ENCODE measurements at regions of chr3 and their contacts with region 1.

Region 1: DNA sequence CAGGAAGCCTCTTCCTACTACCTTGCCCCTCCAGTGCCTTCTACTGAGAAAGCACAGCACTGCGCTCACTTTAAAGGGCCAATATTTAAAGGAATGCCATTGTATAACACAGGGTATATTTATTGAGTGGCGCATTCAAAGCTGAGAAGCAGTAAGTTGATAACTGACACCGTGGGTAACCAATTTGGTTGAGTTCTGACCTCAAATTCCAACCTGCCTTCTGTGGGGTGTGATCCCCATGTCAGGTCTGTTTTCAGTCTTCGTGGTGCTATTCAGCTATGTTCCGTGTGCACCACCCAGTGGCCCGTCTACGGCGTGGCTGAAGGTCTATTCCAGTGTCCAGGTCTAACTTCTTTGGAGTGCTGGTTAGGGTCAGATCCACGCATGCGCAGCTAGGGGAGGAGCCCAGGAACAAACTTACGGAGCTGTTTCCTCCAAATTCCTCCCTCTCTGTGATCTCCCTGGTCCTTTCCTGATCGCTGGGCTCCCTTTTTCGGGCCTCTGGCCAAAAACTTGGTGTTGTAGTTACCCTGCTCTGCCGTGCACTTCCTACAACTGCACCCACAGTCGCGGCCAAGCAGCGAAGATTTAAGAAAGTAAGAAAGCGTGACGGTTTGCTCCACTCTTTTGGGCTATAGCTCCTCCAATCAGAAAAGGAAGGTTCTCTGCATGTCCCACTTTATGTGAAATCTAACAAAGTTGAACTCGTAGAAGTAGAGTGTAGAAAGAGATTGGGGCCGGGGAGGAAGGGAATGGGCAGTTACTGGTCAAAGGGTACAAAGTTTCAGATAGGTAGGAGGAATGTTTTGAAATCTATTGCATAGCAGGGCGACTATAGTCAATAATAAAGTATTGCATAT is 7.7 kb downstream of the LRRC2 start:
- DNase-seq: peak; percentile 98
- ATAC-seq: peak; percentile 94
- H3K4me3 ChIP-seq: peak overlapping the region; percentile 71
- H3K27ac ChIP-seq: peak overlapping the region; percentile 40
- H3K4me1 ChIP-seq: peaks cover 33% of the 10 kb centered on the region
- H3K27me3 ChIP-seq: no peaks in the 10 kb centered on the region
- CTCF ChIP-seq: peak; percentile 96

Region 2: DNA sequence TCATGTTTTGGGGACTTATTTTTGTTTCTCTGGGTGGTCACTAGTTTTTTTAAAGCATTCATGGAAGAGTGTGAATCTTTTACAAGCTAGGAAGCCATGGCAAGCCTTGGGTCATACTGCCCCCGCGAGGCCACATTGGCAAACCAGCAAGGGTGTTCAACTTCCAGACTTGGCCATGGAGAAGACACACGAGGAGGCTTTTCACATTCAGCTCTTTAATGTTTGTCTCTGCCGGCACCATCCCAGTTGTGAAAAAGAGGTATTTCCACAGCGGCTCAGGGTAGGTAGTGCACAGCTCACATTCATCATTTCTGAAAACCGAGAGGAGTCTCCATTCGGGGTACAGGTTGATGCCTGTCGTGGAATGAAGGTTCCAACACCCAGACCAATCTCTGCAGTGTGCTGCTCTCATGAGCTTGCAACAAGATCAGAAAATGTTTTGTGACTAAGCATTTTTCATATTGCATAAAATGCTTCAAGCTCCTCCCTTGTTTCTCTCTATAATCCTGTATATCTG is 179.9 kb before region 1 on chr3:
- CTCF ChIA-PET with region 1: interaction called, 3 read pairs
- POLR2A ChIA-PET with region 1: no interaction called
- intact Hi-C with region 1: loop called (anchors 2 kb)
- DNase-seq: peak; percentile 83
- ATAC-seq: peak; percentile 93
- H3K4me3 ChIP-seq: no peak overlapping the region
- H3K27ac ChIP-seq: no peak overlapping the region
- H3K4me1 ChIP-seq: peaks cover 10% of the 10 kb centered on the region
- H3K27me3 ChIP-seq: no peaks in the 10 kb centered on the region
- CTCF ChIP-seq: peak; percentile 97

Region 3: DNA sequence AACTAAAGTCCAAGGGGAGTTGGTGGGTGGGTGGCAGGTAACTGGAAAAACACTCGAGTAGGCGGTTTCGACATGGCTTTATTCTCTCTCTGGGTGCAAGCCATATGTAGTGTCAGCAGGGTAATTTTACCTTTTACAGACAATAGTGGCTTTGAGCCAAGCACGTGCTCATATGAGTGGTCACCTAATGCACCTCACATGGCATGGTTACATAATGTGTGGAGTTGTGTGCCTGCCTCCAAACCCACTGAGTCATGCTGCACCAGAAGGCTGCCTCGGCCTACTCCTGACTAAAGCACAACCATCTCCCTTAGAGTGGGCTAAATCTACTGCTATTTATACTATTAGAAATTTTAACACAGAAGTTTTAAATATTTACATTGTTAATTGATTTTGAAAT is 134.8 kb before region 1 on chr3:
- CTCF ChIA-PET with region 1: no interaction called
- POLR2A ChIA-PET with region 1: no interaction called
- intact Hi-C with region 1: loop called (anchors 2 kb)
- DNase-seq: peak; percentile 73
- ATAC-seq: no peak
- H3K4me3 ChIP-seq: no peak overlapping the region
- H3K27ac ChIP-seq: peak overlapping the region; percentile 59
- H3K4me1 ChIP-seq: peaks cover 47% of the 10 kb centered on the region
- H3K27me3 ChIP-seq: no peaks in the 10 kb centered on the region
- CTCF ChIP-seq: no peak

Region 4: DNA sequence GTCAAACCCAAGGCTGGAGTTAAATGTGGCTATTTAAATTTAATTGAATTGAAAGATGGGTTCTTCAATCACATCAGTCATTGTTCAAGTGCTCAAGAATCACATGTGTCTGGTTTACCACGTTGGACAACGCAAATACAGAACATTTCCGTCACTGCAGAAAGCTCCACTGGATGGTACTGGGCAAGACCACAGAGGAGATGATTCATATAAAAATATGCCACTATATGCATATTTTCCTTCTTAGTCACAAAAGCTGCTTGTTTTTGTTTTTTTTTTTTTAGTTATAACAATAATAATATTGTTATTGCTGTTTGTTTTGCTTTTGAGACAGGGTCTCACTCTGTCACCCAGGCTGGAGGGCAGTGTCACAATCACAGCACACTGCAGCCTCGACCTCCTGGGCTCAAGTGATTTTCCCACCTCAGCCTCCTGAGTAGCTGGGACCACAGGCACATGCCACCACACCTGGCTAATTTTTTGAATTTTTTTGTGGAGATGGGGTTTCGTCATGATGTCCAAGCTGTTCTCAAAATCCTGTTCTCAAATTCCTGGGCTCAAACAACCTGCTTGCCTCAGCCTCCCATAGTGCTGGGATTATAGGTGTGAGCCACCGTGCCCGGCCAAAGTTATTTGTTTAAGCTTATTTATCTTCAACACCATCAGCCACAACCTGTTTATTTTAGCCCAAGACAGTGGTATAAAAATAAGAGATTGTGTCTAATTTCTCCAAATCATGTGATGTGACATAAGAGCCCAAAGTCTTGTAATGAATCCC is 41.2 kb before region 1 on chr3:
- CTCF ChIA-PET with region 1: interaction called, 8 read pairs
- POLR2A ChIA-PET with region 1: no interaction called
- intact Hi-C with region 1: loop called (anchors 1 kb)
- DNase-seq: peak; percentile 97
- ATAC-seq: peak; percentile 98
- H3K4me3 ChIP-seq: peak overlapping the region; percentile 29; the same call in 1 of the 2 replicates
- H3K27ac ChIP-seq: peak overlapping the region; percentile 90
- H3K4me1 ChIP-seq: peaks cover 23% of the 10 kb centered on the region
- H3K27me3 ChIP-seq: no peaks in the 10 kb centered on the region
- CTCF ChIP-seq: no peak

Region 5: DNA sequence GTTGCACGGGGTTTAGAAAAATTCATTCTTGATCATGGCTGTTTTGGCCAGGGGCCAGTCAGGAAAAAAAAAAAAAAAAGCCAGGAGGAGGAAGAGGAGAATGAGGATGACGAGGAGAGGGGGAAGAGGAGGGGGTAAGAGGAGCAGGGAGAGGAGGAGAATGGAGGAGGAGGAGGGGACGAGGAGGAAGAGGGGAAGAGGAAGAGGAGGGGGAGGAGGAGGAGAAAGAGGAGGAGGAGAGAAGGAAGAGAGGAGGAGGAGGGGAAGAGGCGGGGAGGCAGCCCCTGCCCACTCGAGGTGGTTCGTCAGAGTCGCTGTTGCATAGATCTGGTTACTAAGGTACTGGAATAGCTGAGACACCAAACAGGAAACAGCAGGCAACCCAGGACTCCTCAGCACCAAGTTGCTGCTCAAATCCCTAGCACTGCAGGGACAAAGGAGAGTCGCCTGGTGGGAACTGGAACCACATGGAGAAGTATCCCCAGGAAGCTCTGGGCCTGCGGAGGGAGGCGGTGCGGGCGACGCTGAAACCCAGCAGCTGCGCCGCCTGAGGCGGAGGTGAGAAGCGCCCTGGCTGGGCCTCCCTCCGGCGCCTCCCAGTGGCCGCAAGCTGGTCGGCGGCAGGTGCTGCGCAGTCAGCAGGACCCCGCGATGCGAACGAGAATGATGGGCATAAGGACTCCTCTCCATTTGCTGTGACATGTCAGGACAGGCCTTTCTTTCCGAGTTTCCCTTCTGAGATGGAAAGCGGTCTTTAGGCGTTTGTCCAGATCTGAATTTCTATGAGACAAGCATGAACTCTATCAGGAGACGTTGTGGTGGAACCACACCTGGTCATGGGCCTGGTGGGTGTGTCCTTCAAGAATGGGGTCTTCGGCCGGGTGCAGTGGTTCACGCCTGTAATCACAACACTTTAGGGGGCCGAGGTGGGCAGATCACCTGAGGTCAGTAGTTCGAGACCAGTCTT is 71.4 kb after region 1 on chr3:
- CTCF ChIA-PET with region 1: interaction called, 12 read pairs
- POLR2A ChIA-PET with region 1: no interaction called
- intact Hi-C with region 1: loop called (anchors 1 kb)
- DNase-seq: peak; percentile 79
- ATAC-seq: peak; percentile 96
- H3K4me3 ChIP-seq: no peak overlapping the region
- H3K27ac ChIP-seq: no peak overlapping the region
- H3K4me1 ChIP-seq: no peaks in the 10 kb centered on the region; the same call in 1 of the 2 replicates
- H3K27me3 ChIP-seq: no peaks in the 10 kb centered on the region
- CTCF ChIP-seq: peak; percentile 97

Region 6: DNA sequence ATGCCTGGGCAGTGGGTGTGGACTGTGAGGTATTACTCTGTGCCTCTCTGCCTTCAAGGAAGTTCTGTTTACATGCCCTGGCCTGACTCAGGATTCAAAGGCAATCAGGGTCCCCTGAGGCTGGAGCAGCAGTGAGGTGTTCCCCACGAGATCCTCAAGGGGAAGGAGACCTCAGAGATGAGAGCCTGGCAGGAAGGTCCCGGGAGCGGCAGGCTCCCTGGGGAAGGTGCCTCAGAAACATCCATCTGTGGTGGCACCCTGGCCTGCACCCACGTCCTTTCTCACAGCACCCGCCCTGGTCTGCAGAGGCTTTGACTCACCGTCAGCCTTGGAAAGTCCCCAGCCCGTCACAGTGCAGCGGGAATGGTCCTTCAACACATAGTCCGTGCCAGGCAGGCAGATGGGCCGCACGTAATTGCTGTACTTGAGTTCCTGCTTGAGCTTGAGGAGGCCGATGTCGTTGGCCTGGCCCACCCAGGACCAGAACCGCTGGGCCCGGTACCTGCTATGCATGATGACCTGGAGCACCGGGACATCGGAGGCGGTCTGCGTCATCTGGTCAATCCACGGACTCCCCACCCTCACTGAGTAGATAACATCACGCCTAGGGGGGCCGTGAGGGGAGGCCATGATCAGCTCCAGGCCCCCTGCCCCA is 155.6 kb after region 1 on chr3:
- CTCF ChIA-PET with region 1: no interaction called
- POLR2A ChIA-PET with region 1: no interaction called
- intact Hi-C with region 1: no loop called
- DNase-seq: no peak
- ATAC-seq: peak; percentile 59
- H3K4me3 ChIP-seq: no peak overlapping the region
- H3K27ac ChIP-seq: no peak overlapping the region
- H3K4me1 ChIP-seq: no peaks in the 10 kb centered on the region
- H3K27me3 ChIP-seq: no peaks in the 10 kb centered on the region
- CTCF ChIP-seq: no peak